Right cardiac atrium (tissue), 5 donors: ENCODE measurements at regions of chr20 and their contacts with region 1.

Region 1: DNA sequence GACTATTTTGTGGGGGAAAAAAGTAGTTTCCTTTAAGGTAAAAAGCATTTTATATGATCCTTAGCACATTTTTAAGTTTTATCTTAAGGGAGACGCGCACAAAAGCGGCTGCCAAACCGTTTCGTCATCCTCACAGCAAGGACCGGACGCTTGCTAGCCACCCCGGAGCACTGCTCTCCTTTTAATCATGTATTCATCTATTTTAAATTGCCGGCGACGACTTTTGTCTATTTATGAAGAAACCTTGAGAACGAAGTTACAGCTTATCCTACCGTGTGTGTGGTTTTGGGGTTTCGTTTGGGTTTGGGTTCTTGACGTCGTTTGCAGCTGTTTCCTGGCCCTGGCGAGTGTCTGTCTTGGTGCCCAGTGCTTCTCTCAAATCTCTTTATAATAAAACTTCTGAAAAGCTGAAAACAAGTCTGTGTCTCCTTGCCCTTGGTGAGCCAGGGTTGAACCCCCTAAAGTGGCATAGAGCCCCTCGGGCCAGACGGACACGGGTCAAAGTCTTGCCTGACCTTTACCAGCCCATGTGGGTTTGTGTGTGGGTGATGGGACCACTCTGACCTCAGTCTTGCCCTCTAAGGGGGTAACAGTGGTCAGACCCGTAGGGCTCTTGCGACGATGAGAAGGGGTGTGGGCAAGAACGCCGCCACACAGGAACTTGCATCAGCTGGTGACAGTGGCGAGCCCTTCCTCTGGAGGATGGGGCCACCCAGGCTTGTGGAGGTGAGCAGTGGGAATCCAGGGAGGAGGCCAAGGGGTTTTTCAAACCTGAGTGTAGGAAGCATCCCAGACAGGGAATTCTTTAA is 117.6 kb downstream of the JPH2 start:
- DNase-seq: peak in 1 of 3 donors; percentile 52
- ATAC-seq: no peak
- H3K4me3 ChIP-seq: no peak overlapping the region
- H3K27ac ChIP-seq: no peak overlapping the region
- H3K4me1 ChIP-seq: no peaks in the 10 kb centered on the region
- H3K27me3 ChIP-seq: no peaks in the 10 kb centered on the region

Region 2: DNA sequence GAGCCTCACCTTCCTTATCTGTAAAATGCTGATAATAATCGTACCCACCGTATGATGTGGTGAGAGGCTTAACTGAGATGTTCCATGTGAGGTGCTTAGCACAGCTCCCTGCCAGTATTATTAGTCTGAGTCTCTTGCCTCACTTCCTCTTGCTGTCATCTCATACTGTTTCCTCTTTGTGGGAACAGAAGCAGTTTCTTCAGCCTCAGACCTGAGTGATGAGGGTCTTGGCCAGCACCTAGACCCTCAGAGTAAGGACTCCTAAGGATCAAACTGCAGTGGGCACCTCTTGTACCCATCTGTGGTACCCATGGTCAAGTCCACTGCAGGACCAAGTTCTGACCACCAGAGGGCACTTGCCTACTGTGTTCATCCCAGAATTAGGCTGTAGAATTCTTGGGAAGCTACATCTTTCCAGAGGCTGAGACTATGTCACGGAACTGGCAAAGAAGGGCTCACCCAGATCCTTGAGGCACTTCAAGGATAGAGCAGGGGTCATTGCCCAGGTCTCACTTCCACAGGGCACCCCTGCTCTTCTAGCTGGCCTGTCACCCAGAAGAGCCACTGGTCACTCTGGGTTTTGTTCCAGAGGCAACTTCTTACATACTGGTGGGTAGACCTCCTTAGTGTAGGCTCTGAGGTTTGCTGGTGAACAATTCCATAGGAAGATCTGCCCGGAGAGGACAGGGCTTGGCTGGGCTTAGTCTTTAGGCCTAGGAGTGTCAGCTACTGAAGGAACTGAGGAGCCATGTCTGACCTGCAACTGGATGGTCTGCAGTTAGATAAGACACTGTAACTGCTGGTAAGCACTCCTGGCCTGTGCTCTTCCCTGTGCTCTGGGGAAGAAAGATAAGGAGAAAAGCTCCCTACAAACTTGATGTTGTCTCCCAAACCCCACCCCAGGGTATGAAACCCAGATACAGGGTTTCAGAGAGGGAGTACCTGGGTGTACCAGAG is 531.2 kb before region 1 on chr20:
- intact Hi-C with region 1: loop called in 1 of 4 experiments (anchors 10 kb)
- DNase-seq: peak; percentile 61 to 87 (median 75)
- ATAC-seq: peak; percentile 68 to 73
- H3K4me3 ChIP-seq: no peak overlapping the region
- H3K27ac ChIP-seq: no peak overlapping the region
- H3K4me1 ChIP-seq: no peaks in the 10 kb centered on the region
- H3K27me3 ChIP-seq: no peaks in the 10 kb centered on the region